GM13977 (cell line): ENCODE measurements at regions of chr5 and their contacts with region 1.

Region 1: GRCh38 chr5:181024245-181025064 is 15.6 kb upstream of the BTNL9 start:
- DNase-seq: no peak
- CTCF ChIP-seq: no peak

Region 2: GRCh38 chr5:180950291-180950949 is 74.0 kb before region 1 on chr5:
- in situ Hi-C with region 1: loop called (anchors 10 kb)
- DNase-seq: no peak
- CTCF ChIP-seq: no peak

Region 3: DNA sequence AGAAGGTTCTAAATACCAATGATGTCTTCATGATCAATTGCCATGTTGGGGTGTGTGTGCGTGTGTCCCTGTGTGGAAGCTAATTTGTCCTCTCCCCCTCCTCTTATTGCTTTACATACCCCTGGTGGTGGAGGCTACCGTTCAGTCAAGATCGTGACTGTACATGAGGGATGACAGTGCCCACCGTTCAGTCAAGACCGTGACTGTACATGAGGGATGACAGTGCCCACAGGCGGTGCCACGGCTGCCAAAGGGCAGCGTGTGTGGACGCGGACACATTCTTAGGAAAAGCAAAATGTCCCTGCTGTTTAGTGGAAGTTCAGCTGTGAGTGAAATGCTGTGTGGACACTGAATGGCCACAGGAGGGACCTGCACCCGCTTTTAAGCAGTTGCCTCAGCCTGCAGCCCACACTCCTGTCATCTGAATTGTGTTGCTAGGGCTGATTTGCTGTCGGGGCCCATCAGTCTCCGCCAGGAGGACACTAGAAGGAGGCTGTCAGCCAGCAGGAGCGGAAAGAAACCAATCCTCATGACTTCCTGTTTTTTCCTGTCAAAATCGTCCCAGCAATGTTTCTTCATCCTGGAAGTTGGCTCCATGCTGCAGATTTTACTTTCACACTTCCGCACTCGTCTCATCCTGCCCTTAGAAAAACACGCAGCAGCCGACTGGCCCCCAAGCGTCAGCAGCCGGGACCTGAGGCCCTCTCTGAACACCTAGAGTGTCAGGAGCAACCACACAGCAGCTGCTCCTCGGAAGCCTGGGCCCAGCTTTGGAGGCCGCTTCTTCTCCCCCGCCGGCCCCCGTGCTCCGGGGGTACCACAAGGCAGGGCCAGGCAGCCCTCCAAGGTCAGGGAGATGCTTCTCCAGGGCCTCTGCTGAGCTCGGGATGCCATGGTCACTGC is 97.5 kb after region 1 on chr5:
- in situ Hi-C with region 1: no loop called
- DNase-seq: no peak
- CTCF ChIP-seq: no peak